SK-N-SH (cell line): ENCODE measurements at regions of chr5 and their contacts with region 1.

Region 1: DNA sequence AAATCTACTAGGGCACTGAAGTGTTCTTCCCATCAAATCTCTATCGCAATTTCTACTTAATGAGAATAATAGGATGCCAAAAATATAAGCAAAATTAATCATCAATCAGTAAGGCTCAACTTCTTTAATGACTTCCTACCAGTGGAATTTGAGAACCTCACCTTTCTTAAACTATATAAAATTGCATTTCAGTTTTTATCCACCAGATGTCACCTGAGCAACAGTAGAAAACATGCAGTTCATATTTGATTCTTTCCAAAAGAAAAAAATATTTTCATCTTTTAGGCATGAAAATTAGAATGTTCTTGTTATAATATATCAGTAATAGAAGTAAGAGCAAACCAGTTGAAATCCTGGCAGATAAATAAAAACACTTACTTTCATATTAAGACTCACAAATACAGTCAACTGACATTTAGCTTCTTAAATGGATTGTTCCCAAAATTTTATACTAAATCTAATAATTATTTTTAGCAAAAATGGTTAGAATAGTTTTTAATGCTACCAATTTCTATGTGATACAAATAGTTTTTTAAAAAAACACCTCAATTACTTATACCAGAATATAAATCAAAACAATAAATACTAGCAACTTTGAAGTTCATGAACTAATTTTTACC is 13.4 kb upstream of the CCDC112 start:
- DNase-seq: no peak
- H3K4me3 ChIP-seq: no peak overlapping the region
- H3K27ac ChIP-seq: no peak overlapping the region
- H3K4me1 ChIP-seq: no peaks in the 10 kb centered on the region
- H3K27me3 ChIP-seq: no peaks in the 10 kb centered on the region
- CTCF ChIP-seq: peak; percentile 79
- EP300 ChIP-seq: no peak
- RAD21 ChIP-seq: peak; percentile 78

Region 2: GRCh38 chr5:115296124-115297022 is 13.5 kb before region 1 on chr5 and contains the start of gene CCDC112:
- CTCF ChIA-PET with region 1: interaction called, 20 read pairs
- POLR2A ChIA-PET with region 1: no interaction called
- DNase-seq: peak; percentile 98
- H3K4me3 ChIP-seq: peak within 1 kb of the TSS; percentile 79 to 88
- H3K27ac ChIP-seq: peak within 1 kb of the TSS; percentile 17 to 83; a peak in 3 of 4 replicates
- H3K4me1 ChIP-seq: peaks cover 0 to 4% of the 10 kb centered on the region in 2 experiments; a peak in 2 of 4 replicates
- H3K27me3 ChIP-seq: no peaks in the 10 kb centered on the region
- CTCF ChIP-seq: no peak
- EP300 ChIP-seq: no peak
- RAD21 ChIP-seq: no peak
- polyA plus RNA-seq, gene CCDC112: 2.3 and 2.4 TPM in 2 replicates

Region 3: DNA sequence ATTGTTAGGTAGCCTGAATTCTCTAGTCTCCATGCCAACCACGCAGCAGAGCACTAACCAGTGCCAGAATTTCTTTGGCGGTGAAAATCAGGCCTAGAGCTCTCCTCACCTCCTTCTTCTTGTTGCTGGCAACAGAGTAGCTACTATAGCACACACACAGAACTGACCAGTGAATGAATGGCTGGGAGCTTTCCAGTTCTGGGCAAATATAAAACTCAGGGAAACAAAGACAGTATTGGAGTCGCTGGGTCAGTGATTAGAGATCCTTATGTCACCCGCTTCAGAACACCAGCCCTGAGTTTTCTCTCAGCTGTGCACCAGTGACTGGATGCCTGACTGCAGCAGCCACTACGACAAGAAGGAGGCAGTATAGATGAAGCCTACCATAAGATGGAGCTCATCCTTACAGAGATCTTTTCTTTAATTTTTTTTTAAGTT is 261.6 kb after region 1 on chr5:
- CTCF ChIA-PET with region 1: interaction called, 65 read pairs
- POLR2A ChIA-PET with region 1: no interaction called
- DNase-seq: no peak
- H3K4me3 ChIP-seq: no peak overlapping the region
- H3K27ac ChIP-seq: no peak overlapping the region
- H3K4me1 ChIP-seq: peaks cover 0 to 10% of the 10 kb centered on the region in 2 experiments; a peak in 1 of 4 replicates
- H3K27me3 ChIP-seq: no peaks in the 10 kb centered on the region
- CTCF ChIP-seq: no peak
- EP300 ChIP-seq: no peak
- RAD21 ChIP-seq: no peak

Region 4: DNA sequence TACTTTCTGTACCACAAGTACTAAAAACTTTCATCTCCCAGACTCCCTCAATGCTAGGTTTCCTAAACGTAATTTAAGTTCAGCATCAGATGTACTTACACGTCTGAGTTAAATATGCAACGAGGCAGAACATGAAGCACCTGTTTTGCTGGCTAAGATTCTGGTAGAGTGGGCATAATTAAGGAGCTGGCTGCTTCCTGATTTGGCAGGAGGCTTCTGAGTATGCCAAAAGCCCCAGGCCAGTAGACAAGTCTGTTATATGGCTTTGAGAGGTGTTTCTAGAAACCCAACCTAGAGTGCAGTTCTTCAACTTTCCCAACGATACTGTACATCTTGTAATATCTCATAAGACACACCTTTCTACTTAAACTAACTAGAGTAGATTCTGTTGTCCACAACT is 278.8 kb after region 1 on chr5:
- CTCF ChIA-PET with region 1: interaction called, 40 read pairs
- POLR2A ChIA-PET with region 1: no interaction called
- DNase-seq: no peak
- H3K4me3 ChIP-seq: no peak overlapping the region
- H3K27ac ChIP-seq: no peak overlapping the region
- H3K4me1 ChIP-seq: no peaks in the 10 kb centered on the region
- H3K27me3 ChIP-seq: no peaks in the 10 kb centered on the region
- CTCF ChIP-seq: no peak
- EP300 ChIP-seq: no peak
- RAD21 ChIP-seq: no peak

Region 5: DNA sequence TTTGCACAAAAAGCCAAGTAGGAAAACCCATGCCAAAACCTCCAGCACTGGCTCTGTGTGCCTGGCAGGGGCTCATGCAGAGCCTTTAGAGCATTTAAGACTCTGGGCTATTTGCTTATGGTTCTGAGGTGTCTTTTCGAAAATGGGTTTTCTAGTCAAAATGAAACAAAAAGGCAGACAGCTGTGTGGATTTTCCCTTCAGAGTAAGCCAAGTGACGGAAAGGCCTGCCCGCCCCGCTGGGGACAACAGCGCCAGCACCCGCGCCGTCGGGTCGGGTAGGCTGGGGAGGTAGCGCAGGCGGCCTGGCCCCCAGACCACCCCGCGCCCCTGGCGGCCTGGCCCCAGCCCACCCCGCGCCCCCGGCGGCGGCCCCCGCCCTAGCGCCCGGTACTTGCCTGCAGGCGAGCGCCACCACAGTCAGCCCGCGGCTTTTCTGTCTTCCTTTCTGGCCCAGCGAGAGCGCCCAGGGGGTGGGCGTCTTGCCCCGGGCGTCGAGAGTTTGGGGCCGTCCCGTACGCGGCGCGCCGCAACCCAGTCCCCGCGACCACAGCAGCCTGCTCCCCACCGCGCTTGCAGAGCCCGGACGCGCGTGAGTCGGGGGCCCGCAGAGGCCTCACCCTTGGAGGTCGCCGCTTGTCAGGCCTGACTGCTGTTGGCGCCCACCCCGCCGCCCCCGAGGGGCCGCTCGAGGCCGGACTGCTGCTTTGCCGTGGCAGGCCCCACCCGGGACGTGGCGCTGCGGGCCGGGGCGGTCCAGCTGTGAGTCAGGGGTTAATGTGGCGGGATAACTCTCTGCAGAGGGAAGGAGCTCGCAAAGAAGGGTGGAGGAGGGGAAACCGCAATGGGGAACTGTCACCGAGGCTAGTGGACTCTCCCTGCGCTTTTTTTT is 292.1 kb after region 1 on chr5 and contains the start of gene TICAM2:
- CTCF ChIA-PET with region 1: interaction called, 13 read pairs
- POLR2A ChIA-PET with region 1: no interaction called
- DNase-seq: peak; percentile 40
- H3K4me3 ChIP-seq: no peak within 1 kb of the TSS
- H3K27ac ChIP-seq: no peak within 1 kb of the TSS; a peak in 1 of 4 replicates
- H3K4me1 ChIP-seq: peaks cover 3% of the 10 kb centered on the region in 2 experiments; a peak in 2 of 4 replicates
- H3K27me3 ChIP-seq: no peaks in the 10 kb centered on the region
- CTCF ChIP-seq: no peak
- EP300 ChIP-seq: no peak
- RAD21 ChIP-seq: no peak
- polyA plus RNA-seq, gene TICAM2: not detected in 2 replicates